Dorsolateral prefrontal cortex (tissue), 120 donors: ENCODE measurements at regions of chr7 and their contacts with region 1.

Region 1: GRCh38 chr7:141114029-141114671 is 40.3 kb downstream of the TMEM178B start:
- DNase-seq: no peak
- H3K4me3 ChIP-seq: no peak overlapping the region
- H3K27ac ChIP-seq: no peak overlapping the region
- H3K27me3 ChIP-seq: no peaks in the 10 kb centered on the region
- CTCF ChIP-seq: no peak

Region 2: DNA sequence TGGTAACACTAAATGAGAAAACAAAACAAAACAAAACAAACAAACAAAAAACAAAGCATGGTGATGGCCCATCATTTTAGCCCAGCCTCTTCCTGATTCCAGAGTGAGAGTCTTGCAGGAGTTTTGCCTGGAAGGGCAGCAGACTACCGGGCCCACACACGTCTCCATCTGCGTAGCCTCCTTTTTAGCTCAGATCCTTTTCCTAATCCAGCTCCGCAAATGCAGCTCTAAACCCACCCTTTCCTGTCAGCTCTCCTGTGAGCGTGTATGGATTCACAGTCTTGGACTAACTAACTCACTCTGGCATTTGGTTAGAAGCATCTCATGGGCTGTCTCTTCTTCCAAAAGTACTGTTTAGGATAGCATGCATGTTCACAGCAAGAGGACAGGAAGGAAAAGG is 816.1 kb after region 1 on chr7:
- intact Hi-C with region 1: loop called in 1 of 2 experiments (anchors 5 kb)
- DNase-seq: no peak
- H3K4me3 ChIP-seq: no peak overlapping the region
- H3K27ac ChIP-seq: no peak overlapping the region
- H3K27me3 ChIP-seq: peaks cover 0 to 7% (median 0%) of the 10 kb centered on the region in 45 donors
- CTCF ChIP-seq: no peak